ENCODE measurements at regions of chr2 and their contacts with region 1.

Region 1: GRCh38 chr2:60550178-60550983 is 3.1 kb downstream of the BCL11A start:
- DNase-seq: peak; percentile 65 to 94 (median 83)

Region 2: GRCh38 chr2:59301466-59302402 is 1248.6 kb before region 1 on chr2:
- intact Hi-C with region 1: loop called (anchors 5 kb)
- DNase-seq: peak in 36 of 42 donors; percentile 3 to 79 (median 48)

Region 3: GRCh38 chr2:60297296-60298005 is 252.9 kb before region 1 on chr2:
- intact Hi-C with region 1: loop called (anchors 5 kb)
- DNase-seq: peak in 5 of 42 donors; percentile 8 to 36 (median 24)